BJ (cell line): ENCODE measurements at regions of chr1 and their contacts with region 1.

Region 1: GRCh38 chr1:198686069-198686728 is 47.4 kb downstream of the PTPRC start:
- DNase-seq: no peak
- H3K4me3 ChIP-seq: no peak overlapping the region
- H3K27me3 ChIP-seq: no peaks in the 10 kb centered on the region
- CTCF ChIP-seq: no peak; the same call in 1 of the 2 replicates

Region 2: GRCh38 chr1:198465201-198466144 is 220.7 kb before region 1 on chr1:
- CTCF ChIA-PET with region 1: interaction called, 10 read pairs
- POLR2A ChIA-PET with region 1: no interaction called
- DNase-seq: peak; percentile 32
- H3K4me3 ChIP-seq: no peak overlapping the region
- H3K27me3 ChIP-seq: no peaks in the 10 kb centered on the region
- CTCF ChIP-seq: peak; percentile 55

Region 3: GRCh38 chr1:198497346-198498102 is 188.7 kb before region 1 on chr1:
- CTCF ChIA-PET with region 1: interaction called, 10 read pairs
- POLR2A ChIA-PET with region 1: interaction called, 6 read pairs
- DNase-seq: no peak
- H3K4me3 ChIP-seq: no peak overlapping the region
- H3K27me3 ChIP-seq: no peaks in the 10 kb centered on the region
- CTCF ChIP-seq: no peak

Region 4: GRCh38 chr1:198699167-198700015 is 13.2 kb after region 1 on chr1:
- CTCF ChIA-PET with region 1: interaction called, 12 read pairs
- POLR2A ChIA-PET with region 1: no interaction called
- DNase-seq: no peak
- H3K4me3 ChIP-seq: no peak overlapping the region
- H3K27me3 ChIP-seq: no peaks in the 10 kb centered on the region
- CTCF ChIP-seq: peak; percentile 82

Region 5: DNA sequence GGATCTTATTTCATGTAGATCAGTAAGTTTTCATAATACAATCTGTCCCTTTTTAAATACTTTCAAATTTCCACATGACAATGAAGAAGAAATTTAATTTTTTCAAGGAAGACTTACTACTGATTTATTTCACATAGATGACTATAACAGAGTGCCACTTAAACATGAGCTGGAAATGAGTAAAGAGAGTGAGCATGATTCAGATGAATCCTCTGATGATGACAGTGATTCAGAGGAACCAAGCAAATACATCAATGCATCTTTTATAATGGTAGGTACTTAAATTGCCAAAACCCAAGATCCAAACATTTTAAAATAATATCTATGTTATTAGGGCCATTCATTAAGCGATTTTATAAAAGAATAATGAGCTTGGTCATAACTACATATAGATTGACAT is 63.1 kb after region 1 on chr1:
- CTCF ChIA-PET with region 1: no interaction called
- POLR2A ChIA-PET with region 1: no interaction called
- DNase-seq: no peak
- H3K4me3 ChIP-seq: no peak overlapping the region
- H3K27me3 ChIP-seq: no peaks in the 10 kb centered on the region
- CTCF ChIP-seq: no peak